Heart right ventricle (tissue), 16 donors: ENCODE measurements at regions of chr5 and their contacts with region 1.

Region 1: GRCh38 chr5:93607367-93608258 is 24.6 kb downstream of the NR2F1 start:
- DNase-seq: peak in 1 of 2 donors; percentile 45
- ATAC-seq: peak in 7 of 8 donors; percentile 46 to 79 (median 73)
- H3K4me3 ChIP-seq: no peak overlapping the region
- H3K27ac ChIP-seq: no peak overlapping the region
- H3K4me1 ChIP-seq: peaks cover 0 to 20% (median 14%) of the 10 kb centered on the region in 9 donors
- H3K27me3 ChIP-seq: peaks cover 23 to 100% (median 98%) of the 10 kb centered on the region in 7 donors
- CTCF ChIP-seq: peak in 8 of 9 donors; percentile 8 to 66 (median 54)

Region 2: DNA sequence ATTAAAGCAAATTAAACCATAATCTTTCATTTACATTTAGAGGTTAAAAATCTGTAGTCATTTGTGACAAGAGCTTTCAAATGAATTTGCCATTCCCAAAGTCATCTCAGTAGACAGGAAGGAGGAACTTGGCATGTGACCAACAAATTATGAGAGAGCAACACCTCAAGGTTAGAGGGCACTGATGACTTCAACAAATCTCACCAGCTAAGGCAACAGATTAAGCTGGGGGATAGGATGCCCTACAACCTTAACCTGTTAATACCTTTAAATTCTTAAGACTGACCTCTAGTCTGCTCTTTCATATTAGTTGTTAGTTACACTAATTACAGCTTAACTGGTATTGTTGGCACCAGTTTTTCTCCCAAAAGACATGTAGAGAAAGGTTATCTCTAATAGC is 115.4 kb after region 1 on chr5:
- intact Hi-C with region 1: no loop called
- DNase-seq: no peak
- ATAC-seq: no peak
- H3K4me3 ChIP-seq: no peak overlapping the region
- H3K27ac ChIP-seq: no peak overlapping the region
- H3K4me1 ChIP-seq: peaks cover 0 to 6% (median 0%) of the 10 kb centered on the region in 9 donors
- H3K27me3 ChIP-seq: no peaks in the 10 kb centered on the region
- CTCF ChIP-seq: no peak

Region 3: DNA sequence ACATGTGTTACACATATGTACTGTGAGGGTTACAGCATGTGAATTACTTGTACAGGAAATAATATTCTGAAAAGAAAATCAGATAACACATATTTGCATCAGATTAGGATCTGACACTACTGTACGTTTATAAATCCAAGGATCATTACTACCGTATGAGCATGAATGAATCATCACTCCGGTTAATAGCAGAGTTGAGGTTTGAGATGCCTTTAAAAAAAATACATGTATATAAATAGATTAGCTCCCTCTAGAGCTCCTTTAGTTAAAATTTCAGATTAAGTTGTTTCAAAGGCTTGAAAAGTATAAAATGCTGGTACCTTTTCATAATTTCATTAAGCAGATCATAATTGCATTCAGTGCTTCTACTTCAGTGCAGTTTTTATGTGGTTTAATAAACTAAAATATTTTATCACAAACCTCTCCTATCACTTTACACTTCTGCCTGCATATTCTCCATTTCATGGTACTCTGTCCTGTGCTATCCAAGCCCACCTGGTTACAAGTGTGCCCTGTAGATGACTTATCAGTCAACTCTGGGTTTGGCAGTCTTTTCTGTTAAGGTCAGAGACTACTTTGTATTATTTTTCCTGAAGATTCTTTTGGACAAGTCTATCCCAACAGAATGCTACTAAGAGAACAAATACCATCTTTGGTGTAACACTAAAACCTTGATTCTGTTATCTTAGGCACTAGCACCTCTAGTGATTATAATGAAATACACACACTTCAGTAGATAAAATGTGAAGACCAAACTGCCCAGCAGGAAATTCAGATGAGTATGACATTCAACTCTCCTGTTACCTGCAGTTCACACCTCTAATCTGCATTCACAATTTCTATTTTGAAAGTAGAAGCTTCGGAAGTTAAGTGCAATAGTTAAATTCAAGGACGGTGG is 181.8 kb after region 1 on chr5:
- intact Hi-C with region 1: loop called in 1 of 10 experiments (anchors 10 kb)
- DNase-seq: no peak
- ATAC-seq: no peak
- H3K4me3 ChIP-seq: no peak overlapping the region
- H3K27ac ChIP-seq: no peak overlapping the region
- H3K4me1 ChIP-seq: no peaks in the 10 kb centered on the region
- H3K27me3 ChIP-seq: no peaks in the 10 kb centered on the region
- CTCF ChIP-seq: no peak

Region 4: DNA sequence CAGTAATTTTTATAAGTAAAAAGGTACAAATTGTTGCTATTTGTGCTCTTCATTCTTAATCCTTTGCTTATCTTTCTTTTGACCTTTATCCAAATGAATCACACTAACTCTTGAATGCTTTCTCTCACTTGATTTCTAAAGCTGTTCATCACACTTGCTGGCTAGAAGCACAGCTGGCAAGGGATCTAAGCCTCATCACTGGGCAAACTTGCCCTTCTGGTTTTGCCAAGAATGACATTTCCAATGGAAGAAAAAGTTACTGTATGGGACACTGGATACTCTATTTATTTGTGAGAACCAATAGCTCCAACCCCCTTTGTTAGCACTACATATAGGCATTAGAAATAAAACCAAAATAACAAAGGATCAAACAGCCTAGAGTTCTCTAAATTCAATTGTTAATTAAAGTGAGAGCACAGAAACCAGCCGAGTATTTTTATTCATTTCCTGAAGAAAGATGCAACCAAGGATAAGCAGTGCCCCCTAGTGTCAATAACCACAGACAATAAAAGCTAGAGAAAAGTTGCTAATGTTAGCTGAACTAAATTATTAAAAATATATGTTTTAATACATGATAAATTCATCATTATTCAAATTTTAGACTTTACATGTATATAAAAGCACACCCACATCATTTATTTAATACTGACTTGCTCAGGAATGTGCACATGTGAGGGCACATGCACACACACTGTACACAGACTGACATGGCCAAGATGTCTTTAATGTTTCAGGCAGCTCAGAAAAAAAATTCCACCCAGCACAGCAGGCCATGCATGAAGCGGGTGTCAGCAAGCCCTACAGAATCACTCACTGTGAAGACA is 193.6 kb after region 1 on chr5:
- intact Hi-C with region 1: loop called in 8 of 10 experiments (anchors 1 to 10 kb)
- DNase-seq: peak in 1 of 2 donors; percentile 16
- ATAC-seq: peak in 1 of 8 donors; percentile 51
- H3K4me3 ChIP-seq: no peak overlapping the region
- H3K27ac ChIP-seq: no peak overlapping the region
- H3K4me1 ChIP-seq: peaks cover 0 to 9% (median 5%) of the 10 kb centered on the region in 9 donors
- H3K27me3 ChIP-seq: no peaks in the 10 kb centered on the region
- CTCF ChIP-seq: peak; percentile 41 to 81 (median 76)

Region 5: GRCh38 chr5:93909356-93909755 is 301.7 kb after region 1 on chr5:
- intact Hi-C with region 1: loop called in 1 of 10 experiments (anchors 10 kb)
- DNase-seq: no peak
- ATAC-seq: no peak
- H3K4me3 ChIP-seq: no peak overlapping the region
- H3K27ac ChIP-seq: no peak overlapping the region
- H3K4me1 ChIP-seq: no peaks in the 10 kb centered on the region
- H3K27me3 ChIP-seq: no peaks in the 10 kb centered on the region
- CTCF ChIP-seq: peak in 2 of 9 donors; percentile 25 to 27